Activated CD8-positive, alpha-beta T cell treated with anti-CD3 and anti-CD28 coated beads for 36 hours (primary cell): ENCODE measurements at regions of chr11 and their contacts with region 1.

Region 1: GRCh38 chr11:75717608-75718418 is at the start of gene MOGAT2:
- DNase-seq: no peak
- ATAC-seq: no peak
- H3K4me3 Mint-ChIP-seq: no peak within 1 kb of the TSS
- H3K27ac Mint-ChIP-seq: no peak within 1 kb of the TSS
- H3K4me1 Mint-ChIP-seq: no peaks in the 10 kb centered on the region
- H3K27me3 Mint-ChIP-seq: peaks cover 2% of the 10 kb centered on the region
- CTCF ChIP-seq: no peak
- total RNA-seq, gene MOGAT2: not detected

Region 2: GRCh38 chr11:75399344-75400145 is 318.3 kb before region 1 on chr11 and contains the start of gene RPS3:
- CTCF ChIA-PET with region 1: no interaction called
- POLR2A ChIA-PET with region 1: no interaction called
- intact Hi-C with region 1: no loop called
- DNase-seq: peak; percentile 93
- ATAC-seq: peak; percentile 91
- H3K4me3 Mint-ChIP-seq: peak within 1 kb of the TSS; percentile 100
- H3K27ac Mint-ChIP-seq: peak within 1 kb of the TSS; percentile 99
- H3K4me1 Mint-ChIP-seq: peaks cover 43% of the 10 kb centered on the region
- H3K27me3 Mint-ChIP-seq: no peaks in the 10 kb centered on the region
- CTCF ChIP-seq: no peak
- total RNA-seq, gene RPS3: 4,906 to 4,954 TPM

Region 3: DNA sequence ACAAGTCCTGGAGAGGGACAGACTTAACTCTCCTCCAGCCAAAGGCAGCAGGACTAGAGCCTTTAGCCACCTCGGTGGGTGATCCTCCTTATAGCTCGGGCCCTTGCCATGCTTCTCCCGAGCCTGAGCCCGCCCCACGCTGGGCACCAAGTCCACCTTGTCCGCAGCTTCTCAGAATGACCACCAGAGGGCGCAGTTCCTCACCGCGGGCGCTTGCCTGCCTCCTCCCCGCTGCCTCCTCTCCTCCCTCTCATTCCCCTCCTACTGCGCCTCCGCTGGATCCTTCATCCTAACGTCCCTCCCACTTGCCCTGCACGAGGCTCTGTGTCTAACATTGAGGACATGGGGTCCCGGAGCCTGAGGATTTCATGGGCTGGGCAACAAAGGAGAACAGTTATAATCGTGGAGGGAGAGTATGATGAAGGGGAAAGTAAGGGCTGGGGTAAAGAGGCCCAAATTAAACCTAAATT is 11.5 kb before region 1 on chr11:
- CTCF ChIA-PET with region 1: interaction called, 16 read pairs
- POLR2A ChIA-PET with region 1: no interaction called
- intact Hi-C with region 1: no loop called
- DNase-seq: peak; percentile 65
- ATAC-seq: peak; percentile 98
- H3K4me3 Mint-ChIP-seq: no peak overlapping the region
- H3K27ac Mint-ChIP-seq: no peak overlapping the region
- H3K4me1 Mint-ChIP-seq: no peaks in the 10 kb centered on the region
- H3K27me3 Mint-ChIP-seq: peaks cover 3% of the 10 kb centered on the region
- CTCF ChIP-seq: peak; percentile 94

Region 4: DNA sequence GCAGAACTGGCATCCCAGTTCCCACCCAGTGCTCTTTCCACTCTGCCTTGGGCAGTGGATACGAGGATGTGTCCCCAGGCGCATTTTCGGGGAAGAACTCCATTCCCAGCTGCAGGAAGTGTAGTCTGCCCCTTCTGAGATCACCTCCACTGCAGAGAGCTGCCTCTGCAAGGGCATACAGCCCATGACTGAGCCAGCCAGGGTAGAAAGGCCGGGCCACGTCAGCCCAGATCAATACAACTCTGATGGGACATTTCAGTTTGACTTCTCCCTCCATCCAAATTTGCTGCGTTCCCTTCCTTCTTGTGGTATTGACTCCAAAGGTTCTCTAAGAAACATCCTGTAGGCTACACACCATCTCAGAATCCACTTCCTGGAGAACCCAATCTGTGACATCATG is 19.5 kb after region 1 on chr11:
- CTCF ChIA-PET with region 1: interaction called, 13 read pairs
- POLR2A ChIA-PET with region 1: no interaction called
- intact Hi-C with region 1: no loop called
- DNase-seq: no peak
- ATAC-seq: no peak
- H3K4me3 Mint-ChIP-seq: no peak overlapping the region
- H3K27ac Mint-ChIP-seq: no peak overlapping the region
- H3K4me1 Mint-ChIP-seq: no peaks in the 10 kb centered on the region
- H3K27me3 Mint-ChIP-seq: peaks cover 4% of the 10 kb centered on the region
- CTCF ChIP-seq: no peak

Region 5: DNA sequence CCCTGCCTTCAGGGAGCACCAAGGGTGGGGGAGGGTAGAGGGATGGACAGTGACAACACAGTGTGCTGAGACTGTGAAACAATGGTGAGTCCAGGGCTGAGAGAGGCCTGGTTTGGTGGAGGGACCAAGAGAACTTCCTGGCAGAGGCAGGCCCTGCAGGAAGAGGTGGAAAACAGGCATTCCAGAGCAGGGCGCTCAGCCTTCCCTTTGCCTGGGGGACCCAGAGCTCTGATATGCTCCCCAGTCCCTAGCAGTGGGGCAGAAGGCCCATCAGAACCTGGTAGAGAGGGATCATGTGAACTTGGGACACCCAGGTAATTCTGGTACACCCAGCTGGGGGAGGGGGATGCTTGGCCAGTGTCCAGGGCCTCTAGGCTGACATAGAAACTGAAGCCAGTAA is 80.0 kb after region 1 on chr11:
- CTCF ChIA-PET with region 1: no interaction called
- POLR2A ChIA-PET with region 1: no interaction called
- intact Hi-C with region 1: no loop called
- DNase-seq: no peak
- ATAC-seq: no peak
- H3K4me3 Mint-ChIP-seq: no peak overlapping the region
- H3K27ac Mint-ChIP-seq: no peak overlapping the region
- H3K4me1 Mint-ChIP-seq: no peaks in the 10 kb centered on the region
- H3K27me3 Mint-ChIP-seq: no peaks in the 10 kb centered on the region
- CTCF ChIP-seq: no peak